Activated CD4-positive, alpha-beta T cell treated with anti-CD3 and anti-CD28 coated beads, Interleukin-2, amount 10 ng/mL, durations not matched to agents 24 days and 14 days (primary cell): ENCODE measurements at regions of chr1 and their contacts with region 1.

Region 1: GRCh38 chr1:110106013-110106941 is 6.0 kb upstream of the UBL4B start:
- DNase-seq: peak; percentile 87
- H3K4me3 Mint-ChIP-seq: no peak overlapping the region
- H3K27ac Mint-ChIP-seq: no peak overlapping the region
- H3K4me1 Mint-ChIP-seq: no peaks in the 10 kb centered on the region
- H3K27me3 Mint-ChIP-seq: peaks cover 10% of the 10 kb centered on the region

Region 2: GRCh38 chr1:109509176-109510134 is 596.8 kb before region 1 on chr1 and contains the start of gene AMIGO1:
- intact Hi-C with region 1: no loop called
- DNase-seq: peak; percentile 89
- H3K4me3 Mint-ChIP-seq: peak within 1 kb of the TSS; percentile 90
- H3K27ac Mint-ChIP-seq: peak within 1 kb of the TSS; percentile 66
- H3K4me1 Mint-ChIP-seq: peaks cover 23% of the 10 kb centered on the region
- H3K27me3 Mint-ChIP-seq: peaks cover 42% of the 10 kb centered on the region
- total RNA-seq, gene AMIGO1: 1.1 TPM in 2 replicates

Region 3: GRCh38 chr1:109640285-109640865 is 465.9 kb before region 1 on chr1:
- intact Hi-C with region 1: no loop called
- DNase-seq: peak; percentile 98
- H3K4me3 Mint-ChIP-seq: no peak overlapping the region
- H3K27ac Mint-ChIP-seq: peak overlapping the region; percentile 47
- H3K4me1 Mint-ChIP-seq: peaks cover 13% of the 10 kb centered on the region
- H3K27me3 Mint-ChIP-seq: peaks cover 6% of the 10 kb centered on the region

Region 4: GRCh38 chr1:110034451-110035235 is 71.6 kb before region 1 on chr1 and contains the start of gene STRIP1:
- intact Hi-C with region 1: loop called (anchors 2 kb)
- DNase-seq: peak; percentile 98
- H3K4me3 Mint-ChIP-seq: peak within 1 kb of the TSS; percentile 97
- H3K27ac Mint-ChIP-seq: peak within 1 kb of the TSS; percentile 86
- H3K4me1 Mint-ChIP-seq: peaks cover 46% of the 10 kb centered on the region
- H3K27me3 Mint-ChIP-seq: no peaks in the 10 kb centered on the region
- total RNA-seq, gene STRIP1: 41.0 and 43.8 TPM in 2 replicates

Region 5: DNA sequence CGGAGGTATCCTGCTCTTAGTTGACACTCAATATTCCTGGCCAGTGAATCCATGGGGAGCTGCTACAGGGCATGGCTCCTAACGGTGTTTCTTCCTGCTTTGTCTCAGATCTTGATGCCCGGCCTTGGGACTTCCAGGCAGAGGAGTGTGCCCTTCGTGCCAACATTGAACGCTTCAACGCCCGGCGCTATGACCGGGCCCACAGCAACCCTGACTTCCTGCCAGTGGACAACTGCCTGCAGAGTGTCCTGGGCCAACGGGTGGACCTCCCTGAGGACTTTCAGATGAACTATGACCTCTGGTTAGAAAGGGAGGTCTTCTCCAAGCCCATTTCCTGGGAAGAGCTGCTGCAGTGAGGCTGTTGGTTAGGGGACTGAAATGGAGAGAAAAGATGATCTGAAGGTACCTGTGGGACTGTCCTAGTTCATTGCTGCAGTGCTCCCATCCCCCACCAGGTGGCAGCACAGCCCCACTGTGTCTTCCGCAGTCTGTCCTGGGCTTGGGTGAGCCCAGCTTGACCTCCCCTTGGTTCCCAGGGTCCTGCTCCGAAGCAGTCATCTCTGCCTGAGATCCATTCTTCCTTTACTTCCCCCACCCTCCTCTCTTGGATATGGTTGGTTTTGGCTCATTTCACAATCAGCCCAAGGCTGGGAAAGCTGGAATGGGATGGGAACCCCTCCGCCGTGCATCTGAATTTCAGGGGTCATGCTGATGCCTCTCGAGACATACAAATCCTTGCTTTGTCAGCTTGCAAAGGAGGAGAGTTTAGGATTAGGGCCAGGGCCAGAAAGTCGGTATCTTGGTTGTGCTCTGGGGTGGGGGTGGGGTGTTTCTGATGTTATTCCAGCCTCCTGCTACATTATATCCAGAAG is 52.5 kb before region 1 on chr1:
- intact Hi-C with region 1: loop called (anchors 2 kb)
- DNase-seq: peak; percentile 91
- H3K4me3 Mint-ChIP-seq: no peak overlapping the region
- H3K27ac Mint-ChIP-seq: no peak overlapping the region
- H3K4me1 Mint-ChIP-seq: no peaks in the 10 kb centered on the region
- H3K27me3 Mint-ChIP-seq: no peaks in the 10 kb centered on the region

Region 6: GRCh38 chr1:110087812-110088738 is 18.2 kb before region 1 on chr1:
- intact Hi-C with region 1: loop called (anchors 1 kb)
- DNase-seq: peak; percentile 87
- H3K4me3 Mint-ChIP-seq: no peak overlapping the region
- H3K27ac Mint-ChIP-seq: no peak overlapping the region
- H3K4me1 Mint-ChIP-seq: peaks cover 17% of the 10 kb centered on the region
- H3K27me3 Mint-ChIP-seq: peaks cover 59% of the 10 kb centered on the region

Region 7: GRCh38 chr1:110136911-110137310 is 30.6 kb after region 1 on chr1:
- intact Hi-C with region 1: no loop called
- DNase-seq: peak; percentile 75
- H3K4me3 Mint-ChIP-seq: no peak overlapping the region
- H3K27ac Mint-ChIP-seq: no peak overlapping the region
- H3K4me1 Mint-ChIP-seq: peaks cover 8% of the 10 kb centered on the region
- H3K27me3 Mint-ChIP-seq: peaks cover 41% of the 10 kb centered on the region

Region 8: GRCh38 chr1:110155878-110156522 is 49.7 kb after region 1 on chr1:
- intact Hi-C with region 1: no loop called
- DNase-seq: peak; percentile 88
- H3K4me3 Mint-ChIP-seq: no peak overlapping the region
- H3K27ac Mint-ChIP-seq: no peak overlapping the region
- H3K4me1 Mint-ChIP-seq: no peaks in the 10 kb centered on the region
- H3K27me3 Mint-ChIP-seq: peaks cover 33% of the 10 kb centered on the region